CD8-positive, alpha-beta memory T cell (primary cell): ENCODE measurements at regions of chr3 and their contacts with region 1.

Region 1: GRCh38 chr3:51498876-51499738 is 708 bp downstream of the DCAF1 start:
- DNase-seq: peak; percentile 73 to 87 (median 78)
- H3K4me3 ChIP-seq: peak overlapping the region; percentile 86
- H3K4me3 Mint-ChIP-seq: peak overlapping the region; percentile 87 to 94 (median 91)
- H3K27ac ChIP-seq: peak overlapping the region; percentile 86
- H3K27ac Mint-ChIP-seq: peak overlapping the region; percentile 91 to 99 (median 98)
- H3K4me1 ChIP-seq: peaks cover 11% of the 10 kb centered on the region
- H3K4me1 Mint-ChIP-seq: peaks cover 18 to 36% (median 34%) of the 10 kb centered on the region in 3 donors
- H3K27me3 ChIP-seq: no peaks in the 10 kb centered on the region
- H3K27me3 Mint-ChIP-seq: peaks cover 0 to 5% of the 10 kb centered on the region in 2 donors

Region 2: GRCh38 chr3:50337191-50337841 is 1161.8 kb before region 1 on chr3:
- CTCF ChIA-PET with region 1: no interaction called
- POLR2A ChIA-PET with region 1: interaction called, 15 read pairs
- DNase-seq: peak; percentile 90 to 97 (median 93)
- H3K4me3 ChIP-seq: peak overlapping the region; percentile 73
- H3K4me3 Mint-ChIP-seq: peak overlapping the region; percentile 89 to 97 (median 94)
- H3K27ac ChIP-seq: peak overlapping the region; percentile 88
- H3K27ac Mint-ChIP-seq: peak overlapping the region; percentile 75 to 98 (median 97)
- H3K4me1 ChIP-seq: peaks cover 71% of the 10 kb centered on the region
- H3K4me1 Mint-ChIP-seq: peaks cover 56 to 79% (median 74%) of the 10 kb centered on the region in 3 donors
- H3K27me3 ChIP-seq: no peaks in the 10 kb centered on the region
- H3K27me3 Mint-ChIP-seq: peaks cover 0 to 2% of the 10 kb centered on the region in 2 donors

Region 3: GRCh38 chr3:51391075-51391567 is 108.0 kb before region 1 on chr3 and contains the start of gene RBM15B:
- CTCF ChIA-PET with region 1: interaction called, 8 read pairs
- POLR2A ChIA-PET with region 1: interaction called, 40 read pairs
- DNase-seq: peak; percentile 96 to 98 (median 97)
- H3K4me3 ChIP-seq: peak within 1 kb of the TSS; percentile 56
- H3K4me3 Mint-ChIP-seq: peak within 1 kb of the TSS; percentile 79 to 93 (median 83)
- H3K27ac ChIP-seq: peak within 1 kb of the TSS; percentile 61
- H3K27ac Mint-ChIP-seq: peak within 1 kb of the TSS; percentile 88 to 96 (median 92)
- H3K4me1 ChIP-seq: peaks cover 71% of the 10 kb centered on the region
- H3K4me1 Mint-ChIP-seq: peaks cover 54 to 81% (median 66%) of the 10 kb centered on the region in 3 donors
- H3K27me3 ChIP-seq: no peaks in the 10 kb centered on the region
- H3K27me3 Mint-ChIP-seq: no peaks in the 10 kb centered on the region
- total RNA-seq, gene RBM15B: 47.4 to 47.8 TPM

Region 4: GRCh38 chr3:51670823-51671733 is 172.0 kb after region 1 on chr3 and contains the start of gene TEX264:
- CTCF ChIA-PET with region 1: interaction called, 93 read pairs
- POLR2A ChIA-PET with region 1: interaction called, 24 read pairs
- DNase-seq: peak; percentile 94 to 97 (median 95)
- H3K4me3 ChIP-seq: peak within 1 kb of the TSS; percentile 90
- H3K4me3 Mint-ChIP-seq: peak within 1 kb of the TSS; percentile 84 to 96 (median 91)
- H3K27ac ChIP-seq: peak within 1 kb of the TSS; percentile 96
- H3K27ac Mint-ChIP-seq: peak within 1 kb of the TSS; percentile 88 to 98 (median 92)
- H3K4me1 ChIP-seq: peaks cover 62% of the 10 kb centered on the region
- H3K4me1 Mint-ChIP-seq: peaks cover 62 to 72% (median 65%) of the 10 kb centered on the region in 3 donors
- H3K27me3 ChIP-seq: no peaks in the 10 kb centered on the region
- H3K27me3 Mint-ChIP-seq: peaks cover 0 to 2% of the 10 kb centered on the region in 2 donors
- total RNA-seq, gene TEX264: 48.2 to 52.3 TPM

Region 5: GRCh38 chr3:51799879-51800749 is 301.0 kb after region 1 on chr3:
- CTCF ChIA-PET with region 1: interaction called, 23 read pairs
- POLR2A ChIA-PET with region 1: interaction called, 14 read pairs
- DNase-seq: peak in 2 of 5 donors; percentile 29 to 47
- H3K4me3 ChIP-seq: no peak overlapping the region
- H3K4me3 Mint-ChIP-seq: no peak overlapping the region
- H3K27ac ChIP-seq: no peak overlapping the region
- H3K27ac Mint-ChIP-seq: peak overlapping the region in 2 of 8 donors; percentile 0 to 72
- H3K4me1 ChIP-seq: no peaks in the 10 kb centered on the region
- H3K4me1 Mint-ChIP-seq: peaks cover 10 to 25% (median 12%) of the 10 kb centered on the region in 3 donors
- H3K27me3 ChIP-seq: no peaks in the 10 kb centered on the region
- H3K27me3 Mint-ChIP-seq: peaks cover 3 to 30% of the 10 kb centered on the region in 2 donors

Region 6: DNA sequence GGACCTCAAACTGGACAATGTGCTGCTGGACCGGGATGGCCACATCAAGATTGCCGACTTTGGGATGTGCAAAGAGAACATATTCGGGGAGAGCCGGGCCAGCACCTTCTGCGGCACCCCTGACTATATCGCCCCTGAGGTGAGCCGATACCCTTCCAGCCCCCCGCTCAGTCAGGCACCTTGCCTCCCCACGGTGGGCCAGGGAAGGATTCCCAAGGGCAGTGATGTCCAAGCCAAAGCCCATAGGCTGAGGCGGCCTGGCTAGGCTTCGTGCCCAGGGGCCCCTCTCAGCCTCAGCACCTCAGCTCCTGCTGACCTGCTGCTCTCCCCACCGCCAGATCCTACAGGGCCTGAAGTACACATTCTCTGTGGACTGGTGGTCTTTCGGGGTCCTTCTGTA is 1689.6 kb after region 1 on chr3:
- CTCF ChIA-PET with region 1: no interaction called
- POLR2A ChIA-PET with region 1: interaction called, 10 read pairs
- DNase-seq: peak in 1 of 5 donors; percentile 42
- H3K4me3 ChIP-seq: no peak overlapping the region
- H3K4me3 Mint-ChIP-seq: no peak overlapping the region
- H3K27ac ChIP-seq: no peak overlapping the region
- H3K27ac Mint-ChIP-seq: no peak overlapping the region
- H3K4me1 ChIP-seq: no peaks in the 10 kb centered on the region
- H3K4me1 Mint-ChIP-seq: peaks cover 0 to 1% (median 0%) of the 10 kb centered on the region in 3 donors
- H3K27me3 ChIP-seq: no peaks in the 10 kb centered on the region
- H3K27me3 Mint-ChIP-seq: no peaks in the 10 kb centered on the region